BJ (cell line): ENCODE measurements at regions of chr12 and their contacts with region 1.

Region 1: GRCh38 chr12:9331218-9331626 is 123.0 kb upstream of the PZP start:
- DNase-seq: no peak
- H3K4me3 ChIP-seq: no peak overlapping the region
- H3K27me3 ChIP-seq: peaks cover 1% of the 10 kb centered on the region; the same call in 1 of the 2 replicates
- CTCF ChIP-seq: peak; percentile 99

Region 2: GRCh38 chr12:9347328-9348127 is 16.3 kb after region 1 on chr12:
- CTCF ChIA-PET with region 1: interaction called, 14 read pairs
- POLR2A ChIA-PET with region 1: no interaction called
- DNase-seq: no peak
- H3K4me3 ChIP-seq: no peak overlapping the region
- H3K27me3 ChIP-seq: peaks cover 3% of the 10 kb centered on the region; the same call in 1 of the 2 replicates
- CTCF ChIP-seq: no peak

Region 3: GRCh38 chr12:9464408-9464807 is 133.2 kb after region 1 on chr12:
- CTCF ChIA-PET with region 1: interaction called, 31 read pairs
- POLR2A ChIA-PET with region 1: no interaction called
- DNase-seq: no peak
- H3K4me3 ChIP-seq: no peak overlapping the region
- H3K27me3 ChIP-seq: no peaks in the 10 kb centered on the region
- CTCF ChIP-seq: no peak